CD4-positive, alpha-beta memory T cell (primary cell): ENCODE measurements at regions of chr12 and their contacts with region 1.

Region 1: DNA sequence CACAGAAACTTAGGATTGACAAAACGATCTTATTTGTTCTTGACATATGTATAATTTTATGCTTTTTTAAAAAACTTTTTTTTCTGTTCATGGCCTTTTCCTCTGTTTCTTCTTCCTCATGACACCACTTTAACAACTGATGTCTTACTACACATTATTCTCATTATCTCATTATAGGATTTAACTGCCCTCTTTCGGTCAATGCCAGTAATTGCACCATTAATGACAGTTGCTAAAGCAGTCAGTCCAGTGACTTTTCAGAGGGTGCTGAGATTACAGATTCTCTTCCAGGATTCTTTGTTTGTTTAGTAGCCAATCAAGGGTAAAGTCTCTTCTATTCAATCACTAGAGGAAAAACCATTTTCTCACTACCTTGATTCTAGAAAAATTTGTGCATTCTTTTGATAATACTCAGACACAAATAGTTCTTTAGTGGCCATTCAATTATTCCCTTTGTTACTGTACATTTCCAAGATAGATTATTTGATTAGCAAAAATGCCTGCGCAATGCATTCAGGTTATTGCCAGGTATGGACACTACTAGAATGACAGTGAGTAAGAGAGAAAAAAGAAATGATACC is 50.1 kb downstream of the KLRG1 start:
- DNase-seq: peak in 4 of 5 donors; percentile 67 to 75 (median 70)
- H3K4me3 ChIP-seq: no peak overlapping the region
- H3K4me3 Mint-ChIP-seq: peak overlapping the region in 6 of 8 donors; percentile 5 to 57 (median 50)
- H3K27ac ChIP-seq: peak overlapping the region; percentile 2
- H3K27ac Mint-ChIP-seq: peak overlapping the region; percentile 38 to 82 (median 66)
- H3K4me1 ChIP-seq: peaks cover 68% of the 10 kb centered on the region
- H3K4me1 Mint-ChIP-seq: peaks cover 45 to 84% (median 64%) of the 10 kb centered on the region in 4 donors
- H3K27me3 ChIP-seq: no peaks in the 10 kb centered on the region
- H3K27me3 Mint-ChIP-seq: no peaks in the 10 kb centered on the region

Region 2: GRCh38 chr12:8914716-8915526 is 124.6 kb before region 1 on chr12:
- CTCF ChIA-PET with region 1: interaction called, 9 read pairs
- POLR2A ChIA-PET with region 1: interaction called, 3 read pairs
- intact Hi-C with region 1: loop called (anchors 1 kb)
- DNase-seq: peak; percentile 65 to 80 (median 70)
- H3K4me3 ChIP-seq: peak overlapping the region; percentile 81 to 92
- H3K4me3 Mint-ChIP-seq: no peak overlapping the region
- H3K27ac ChIP-seq: peak overlapping the region; percentile 63
- H3K27ac Mint-ChIP-seq: no peak overlapping the region
- H3K4me1 ChIP-seq: peaks cover 36% of the 10 kb centered on the region
- H3K4me1 Mint-ChIP-seq: peaks cover 10 to 17% (median 14%) of the 10 kb centered on the region in 4 donors
- H3K27me3 ChIP-seq: no peaks in the 10 kb centered on the region
- H3K27me3 Mint-ChIP-seq: no peaks in the 10 kb centered on the region

Region 3: GRCh38 chr12:8989413-8989812 is 50.1 kb before region 1 on chr12 and contains the start of gene KLRG1:
- CTCF ChIA-PET with region 1: interaction called, 11 read pairs
- POLR2A ChIA-PET with region 1: interaction called, 7 read pairs
- intact Hi-C with region 1: loop called (anchors 1 kb)
- DNase-seq: peak in 4 of 5 donors; percentile 15 to 57 (median 26)
- H3K4me3 ChIP-seq: peak within 1 kb of the TSS in 1 of 2 donors; percentile 22
- H3K4me3 Mint-ChIP-seq: peak within 1 kb of the TSS; percentile 66 to 99 (median 89)
- H3K27ac ChIP-seq: peak within 1 kb of the TSS; percentile 24
- H3K27ac Mint-ChIP-seq: peak within 1 kb of the TSS; percentile 86 to 96 (median 92)
- H3K4me1 ChIP-seq: peaks cover 76% of the 10 kb centered on the region
- H3K4me1 Mint-ChIP-seq: peaks cover 46 to 72% (median 57%) of the 10 kb centered on the region in 4 donors
- H3K27me3 ChIP-seq: no peaks in the 10 kb centered on the region
- H3K27me3 Mint-ChIP-seq: no peaks in the 10 kb centered on the region
- total RNA-seq, gene KLRG1: 51.2 to 55.8 TPM

Region 4: GRCh38 chr12:8996682-8997360 is 42.7 kb before region 1 on chr12:
- CTCF ChIA-PET with region 1: interaction called, 11 read pairs
- POLR2A ChIA-PET with region 1: interaction called, 7 read pairs
- intact Hi-C with region 1: loop called (anchors 1 kb)
- DNase-seq: peak in 4 of 5 donors; percentile 4 to 46 (median 16)
- H3K4me3 ChIP-seq: no peak overlapping the region
- H3K4me3 Mint-ChIP-seq: peak overlapping the region in 7 of 8 donors; percentile 66 to 95 (median 79)
- H3K27ac ChIP-seq: peak overlapping the region; percentile 27
- H3K27ac Mint-ChIP-seq: peak overlapping the region; percentile 71 to 93 (median 88)
- H3K4me1 ChIP-seq: peaks cover 81% of the 10 kb centered on the region
- H3K4me1 Mint-ChIP-seq: peaks cover 51 to 82% (median 67%) of the 10 kb centered on the region in 4 donors
- H3K27me3 ChIP-seq: no peaks in the 10 kb centered on the region
- H3K27me3 Mint-ChIP-seq: no peaks in the 10 kb centered on the region